ENCODE measurements at regions of chr19 and their contacts with region 1.

Region 1: DNA sequence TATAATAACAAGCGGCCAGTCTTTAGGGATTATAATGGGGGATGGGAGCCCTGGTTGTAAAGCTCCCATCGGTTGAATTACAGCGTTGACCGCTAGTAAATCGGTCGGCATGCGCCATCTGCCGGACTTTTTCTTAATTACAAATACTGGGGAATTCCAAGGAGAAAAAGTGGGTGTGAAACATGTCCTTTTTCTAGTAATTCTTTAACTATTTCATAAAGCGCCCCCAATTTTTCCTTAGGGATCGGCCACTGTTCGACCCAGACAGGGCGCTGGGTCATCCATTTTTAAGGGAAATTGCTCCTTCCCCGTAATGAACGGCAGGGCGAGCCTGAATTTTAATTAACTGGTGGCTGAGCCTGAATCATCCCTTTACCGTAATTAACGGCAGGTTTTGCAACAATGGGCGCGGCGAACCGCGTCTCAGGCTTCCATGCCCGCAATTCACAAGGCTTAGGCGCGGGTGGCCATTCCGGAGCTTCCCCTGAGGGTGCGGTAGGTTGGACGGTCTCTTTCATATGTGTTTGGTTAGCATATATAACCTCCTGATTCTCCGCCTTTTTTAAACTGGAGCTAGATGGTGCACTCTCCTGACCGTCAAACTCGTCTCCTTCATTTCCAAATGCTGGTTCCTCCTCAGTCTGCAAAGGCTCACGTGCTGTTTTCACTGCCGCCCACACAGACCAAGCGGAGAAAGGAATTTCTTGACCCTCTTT is 30.2 kb upstream of the EVI5L start:
- DNase-seq: peak in 1 of 2 donors; percentile 41
- ATAC-seq: peak in 3 of 4 donors; percentile 70 to 85 (median 82)
- H3K4me3 ChIP-seq: peak overlapping the region; percentile 28
- H3K27ac ChIP-seq: no peak overlapping the region
- H3K4me1 ChIP-seq: peaks cover 11% of the 10 kb centered on the region
- H3K27me3 ChIP-seq: peaks cover under 1 to 36% (median 5%) of the 10 kb centered on the region in 3 donors
- CTCF ChIP-seq: peak; percentile 67

Region 2: GRCh38 chr19:7287722-7288500 is 511.9 kb before region 1 on chr19:
- intact Hi-C with region 1: no loop called
- DNase-seq: no peak
- ATAC-seq: no peak
- H3K4me3 ChIP-seq: no peak overlapping the region
- H3K27ac ChIP-seq: no peak overlapping the region
- H3K4me1 ChIP-seq: peaks cover 12% of the 10 kb centered on the region
- H3K27me3 ChIP-seq: no peaks in the 10 kb centered on the region
- CTCF ChIP-seq: no peak

Region 3: GRCh38 chr19:7349961-7350711 is 449.7 kb before region 1 on chr19:
- intact Hi-C with region 1: loop called in 1 of 2 experiments (anchors 5 kb)
- DNase-seq: no peak
- ATAC-seq: no peak
- H3K4me3 ChIP-seq: no peak overlapping the region
- H3K27ac ChIP-seq: no peak overlapping the region
- H3K4me1 ChIP-seq: no peaks in the 10 kb centered on the region
- H3K27me3 ChIP-seq: peaks cover 0 to 4% (median 1%) of the 10 kb centered on the region in 3 donors
- CTCF ChIP-seq: no peak

Region 4: DNA sequence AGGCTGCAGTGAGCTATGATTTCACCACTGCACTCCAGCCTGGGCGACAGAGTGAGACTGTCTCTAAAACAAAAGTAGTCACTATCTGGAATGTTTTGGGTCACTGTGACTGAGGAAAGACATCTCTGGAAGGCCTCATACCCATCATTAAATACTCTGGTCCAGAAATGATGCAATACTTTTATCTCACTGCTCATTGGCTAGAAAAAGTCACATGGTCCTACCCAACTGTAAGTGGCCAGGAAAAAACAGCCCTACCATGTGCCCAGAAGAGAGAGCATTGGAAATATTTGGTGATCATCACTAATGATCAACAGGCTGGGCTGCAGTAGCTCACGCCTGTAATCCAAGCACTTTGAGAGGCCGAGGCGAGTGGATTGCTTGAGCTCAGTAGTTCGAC is 234.5 kb before region 1 on chr19:
- intact Hi-C with region 1: loop called (anchors 1 to 5 kb)
- DNase-seq: no peak
- ATAC-seq: no peak
- H3K4me3 ChIP-seq: no peak overlapping the region
- H3K27ac ChIP-seq: no peak overlapping the region
- H3K4me1 ChIP-seq: no peaks in the 10 kb centered on the region
- H3K27me3 ChIP-seq: no peaks in the 10 kb centered on the region
- CTCF ChIP-seq: no peak

Region 5: GRCh38 chr19:7605490-7606222 is 194.1 kb before region 1 on chr19:
- intact Hi-C with region 1: no loop called
- DNase-seq: no peak
- ATAC-seq: peak in 1 of 4 donors; percentile 47
- H3K4me3 ChIP-seq: no peak overlapping the region
- H3K27ac ChIP-seq: no peak overlapping the region
- H3K4me1 ChIP-seq: no peaks in the 10 kb centered on the region
- H3K27me3 ChIP-seq: peaks cover 0 to 15% (median 2%) of the 10 kb centered on the region in 3 donors
- CTCF ChIP-seq: no peak

Region 6: GRCh38 chr19:7652061-7652641 is 147.6 kb before region 1 on chr19:
- intact Hi-C with region 1: loop called in 1 of 2 experiments (anchors 2 kb)
- DNase-seq: peak; percentile 83 to 90
- ATAC-seq: peak; percentile 98 to 100 (median 100)
- H3K4me3 ChIP-seq: peak overlapping the region; percentile 38
- H3K27ac ChIP-seq: peak overlapping the region; percentile 79
- H3K4me1 ChIP-seq: peaks cover 4% of the 10 kb centered on the region
- H3K27me3 ChIP-seq: no peaks in the 10 kb centered on the region
- CTCF ChIP-seq: peak; percentile 99

Region 7: DNA sequence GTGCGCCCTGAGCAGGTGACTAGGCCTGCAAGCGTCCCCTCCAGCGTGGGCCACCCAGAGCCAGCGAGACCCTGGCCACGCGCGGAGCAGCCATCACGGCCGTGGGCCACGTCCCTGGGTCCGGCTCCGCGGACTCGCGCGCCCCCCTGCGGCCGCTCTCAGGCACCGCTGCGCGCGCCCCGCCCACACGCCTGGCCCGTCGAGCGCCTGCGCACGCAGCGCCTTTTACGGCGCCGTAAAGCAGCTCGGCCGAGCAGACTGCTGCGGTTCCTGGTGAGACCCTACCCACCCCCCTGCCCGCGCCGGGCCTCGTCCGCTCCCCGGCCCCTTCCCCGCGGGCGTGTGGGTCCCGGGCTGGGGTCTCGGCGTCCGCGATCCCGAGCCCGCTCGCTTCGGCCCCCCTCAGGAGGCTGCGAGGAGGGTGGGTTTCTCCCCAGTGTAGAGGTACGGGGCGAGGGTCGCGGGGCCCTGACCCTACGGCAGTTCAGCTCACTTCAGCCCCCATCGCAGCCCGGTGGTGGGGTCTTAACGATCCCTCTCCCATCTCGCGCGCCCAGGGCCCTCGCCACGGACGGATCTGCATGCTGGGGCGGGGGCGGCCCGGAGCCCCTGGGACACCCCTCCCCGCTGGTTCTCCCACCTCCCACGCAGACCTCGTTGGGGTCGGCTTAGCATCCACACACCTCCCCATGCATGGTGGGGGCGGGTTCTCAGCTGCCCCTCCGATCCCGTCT is 119.0 kb before region 1 on chr19 and contains the start of gene TRAPPC5:
- intact Hi-C with region 1: loop called in 1 of 2 experiments (anchors 1 kb)
- DNase-seq: peak; percentile 89 to 92
- ATAC-seq: peak; percentile 89 to 96 (median 93)
- H3K4me3 ChIP-seq: peak within 1 kb of the TSS; percentile 100
- H3K27ac ChIP-seq: peak within 1 kb of the TSS; percentile 93
- H3K4me1 ChIP-seq: no peaks in the 10 kb centered on the region
- H3K27me3 ChIP-seq: peaks cover 0 to 11% (median 0%) of the 10 kb centered on the region in 3 donors
- CTCF ChIP-seq: peak; percentile 98
- total RNA-seq, gene TRAPPC5: 83.4 to 164 (median 104) TPM